Calu3 (cell line): ENCODE measurements at regions of chrX and their contacts with region 1.

Region 1: GRCh38 chrX:41922694-41923151 is 631 bp downstream of the CASK start:
- DNase-seq: peak; percentile 40
- H3K4me3 Mint-ChIP-seq: peak overlapping the region; percentile 91
- H3K27ac Mint-ChIP-seq: peak overlapping the region; percentile 81
- H3K4me1 Mint-ChIP-seq: peaks cover 4% of the 10 kb centered on the region
- H3K27me3 Mint-ChIP-seq: no peaks in the 10 kb centered on the region
- CTCF ChIP-seq: no peak

Region 2: GRCh38 chrX:41796577-41796976 is 126.1 kb before region 1 on chrX:
- CTCF ChIA-PET with region 1: no interaction called
- intact Hi-C with region 1: loop called (anchors 2 kb)
- DNase-seq: no peak
- H3K4me3 Mint-ChIP-seq: no peak overlapping the region
- H3K27ac Mint-ChIP-seq: no peak overlapping the region
- H3K4me1 Mint-ChIP-seq: peaks cover 13% of the 10 kb centered on the region
- H3K27me3 Mint-ChIP-seq: no peaks in the 10 kb centered on the region
- CTCF ChIP-seq: no peak

Region 3: GRCh38 chrX:41837270-41837944 is 85.3 kb before region 1 on chrX:
- CTCF ChIA-PET with region 1: no interaction called
- intact Hi-C with region 1: no loop called
- DNase-seq: no peak
- H3K4me3 Mint-ChIP-seq: no peak overlapping the region
- H3K27ac Mint-ChIP-seq: peak overlapping the region; percentile 63
- H3K4me1 Mint-ChIP-seq: no peaks in the 10 kb centered on the region
- H3K27me3 Mint-ChIP-seq: no peaks in the 10 kb centered on the region
- CTCF ChIP-seq: no peak

Region 4: DNA sequence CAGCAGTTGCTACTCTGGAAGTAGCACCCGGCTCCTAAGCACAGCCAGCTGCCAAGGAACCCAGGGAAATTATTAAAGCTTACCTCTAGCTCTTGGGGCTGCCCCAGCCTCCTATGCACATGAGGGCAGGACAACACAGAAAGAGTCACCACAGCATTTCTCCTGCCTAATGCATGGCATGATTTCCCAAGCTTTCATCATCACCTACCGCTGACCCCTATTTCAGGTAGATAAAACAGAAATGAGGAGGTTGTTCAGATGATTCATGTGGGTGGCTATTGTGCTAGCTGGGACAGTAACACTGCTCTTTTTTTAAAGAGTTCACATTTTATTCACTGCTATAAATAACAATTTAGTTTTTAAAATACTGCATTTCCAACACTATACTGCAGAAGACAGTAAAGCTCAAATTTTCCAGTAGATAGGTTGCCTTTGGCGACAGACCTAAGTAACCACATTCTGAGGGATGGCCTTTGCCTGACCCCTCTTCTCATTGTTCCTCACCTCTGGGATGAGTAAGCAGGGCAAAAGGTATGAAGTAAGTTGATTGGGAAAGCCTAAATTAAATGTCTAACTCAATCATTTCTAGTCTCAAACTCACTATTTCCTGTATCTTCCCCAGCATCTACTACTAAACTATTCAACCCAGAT is 16.1 kb before region 1 on chrX:
- CTCF ChIA-PET with region 1: no interaction called
- intact Hi-C with region 1: loop called (anchors 2 kb)
- DNase-seq: no peak
- H3K4me3 Mint-ChIP-seq: peak overlapping the region; percentile 14
- H3K27ac Mint-ChIP-seq: peak overlapping the region; percentile 84
- H3K4me1 Mint-ChIP-seq: peaks cover 50% of the 10 kb centered on the region
- H3K27me3 Mint-ChIP-seq: no peaks in the 10 kb centered on the region
- CTCF ChIP-seq: no peak

Region 5: GRCh38 chrX:42290608-42291007 is 367.9 kb after region 1 on chrX:
- CTCF ChIA-PET with region 1: no interaction called
- intact Hi-C with region 1: loop called (anchors 1 kb)
- DNase-seq: no peak
- H3K4me3 Mint-ChIP-seq: no peak overlapping the region
- H3K27ac Mint-ChIP-seq: no peak overlapping the region
- H3K4me1 Mint-ChIP-seq: no peaks in the 10 kb centered on the region
- H3K27me3 Mint-ChIP-seq: no peaks in the 10 kb centered on the region
- CTCF ChIP-seq: no peak